Left ventricle myocardium inferior (tissue), 1 donor: ENCODE measurements at regions of chr14 and their contacts with region 1.

Region 1: GRCh38 chr14:50364792-50365191 is 31.9 kb downstream of the CDKL1 start:
- DNase-seq: no peak
- H3K4me3 ChIP-seq: no peak overlapping the region
- H3K27ac ChIP-seq: no peak overlapping the region
- H3K4me1 ChIP-seq: peaks cover 19% of the 10 kb centered on the region
- H3K27me3 ChIP-seq: no peaks in the 10 kb centered on the region
- CTCF ChIP-seq: no peak

Region 2: DNA sequence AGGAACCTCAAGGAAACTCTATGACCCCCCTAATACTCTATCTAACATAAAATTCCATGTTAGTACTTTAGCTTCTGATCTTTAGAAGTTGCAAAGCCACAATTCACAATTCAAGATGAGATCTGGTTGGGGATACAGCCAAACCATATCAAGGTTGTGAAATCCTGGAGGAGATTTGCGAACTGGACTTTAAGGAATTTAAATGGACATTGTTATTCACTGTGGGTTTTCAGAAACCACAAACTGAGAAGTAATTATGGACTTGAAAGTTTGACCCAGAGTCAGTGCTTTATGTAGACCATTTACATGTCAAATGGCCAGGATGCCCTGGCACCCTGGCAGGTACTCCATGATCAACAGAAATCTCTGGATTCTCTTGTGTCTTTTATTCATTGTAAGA is 46.1 kb after region 1 on chr14:
- intact Hi-C with region 1: loop called (anchors 5 kb)
- DNase-seq: no peak
- H3K4me3 ChIP-seq: no peak overlapping the region
- H3K27ac ChIP-seq: no peak overlapping the region
- H3K4me1 ChIP-seq: peaks cover 10% of the 10 kb centered on the region
- H3K27me3 ChIP-seq: no peaks in the 10 kb centered on the region
- CTCF ChIP-seq: no peak